ENCODE measurements at regions of chr6 and their contacts with region 1.

Region 1: GRCh38 chr6:143427109-143427817 is 23.2 kb downstream of the ADAT2 start:
- DNase-seq: peak; percentile 59 to 74 (median 65)
- ATAC-seq: peak; percentile 97 to 98 (median 98)
- H3K4me3 ChIP-seq: no peak overlapping the region
- H3K27ac ChIP-seq: no peak overlapping the region
- H3K4me1 ChIP-seq: peaks cover 0 to 14% (median 5%) of the 10 kb centered on the region in 4 donors
- H3K27me3 ChIP-seq: no peaks in the 10 kb centered on the region
- CTCF ChIP-seq: peak; percentile 83 to 97 (median 94)
- POLR2A ChIP-seq: no peak

Region 2: GRCh38 chr6:142692942-142693341 is 734.3 kb before region 1 on chr6:
- intact Hi-C with region 1: loop called in 1 of 2 experiments (anchors 10 kb)
- DNase-seq: peak in 2 of 3 donors; percentile 41 to 55
- ATAC-seq: peak; percentile 60 to 74 (median 72)
- H3K4me3 ChIP-seq: no peak overlapping the region
- H3K27ac ChIP-seq: no peak overlapping the region
- H3K4me1 ChIP-seq: peaks cover 0 to 30% (median 0%) of the 10 kb centered on the region in 4 donors
- H3K27me3 ChIP-seq: no peaks in the 10 kb centered on the region
- CTCF ChIP-seq: peak; percentile 84 to 92 (median 90)
- POLR2A ChIP-seq: no peak

Region 3: DNA sequence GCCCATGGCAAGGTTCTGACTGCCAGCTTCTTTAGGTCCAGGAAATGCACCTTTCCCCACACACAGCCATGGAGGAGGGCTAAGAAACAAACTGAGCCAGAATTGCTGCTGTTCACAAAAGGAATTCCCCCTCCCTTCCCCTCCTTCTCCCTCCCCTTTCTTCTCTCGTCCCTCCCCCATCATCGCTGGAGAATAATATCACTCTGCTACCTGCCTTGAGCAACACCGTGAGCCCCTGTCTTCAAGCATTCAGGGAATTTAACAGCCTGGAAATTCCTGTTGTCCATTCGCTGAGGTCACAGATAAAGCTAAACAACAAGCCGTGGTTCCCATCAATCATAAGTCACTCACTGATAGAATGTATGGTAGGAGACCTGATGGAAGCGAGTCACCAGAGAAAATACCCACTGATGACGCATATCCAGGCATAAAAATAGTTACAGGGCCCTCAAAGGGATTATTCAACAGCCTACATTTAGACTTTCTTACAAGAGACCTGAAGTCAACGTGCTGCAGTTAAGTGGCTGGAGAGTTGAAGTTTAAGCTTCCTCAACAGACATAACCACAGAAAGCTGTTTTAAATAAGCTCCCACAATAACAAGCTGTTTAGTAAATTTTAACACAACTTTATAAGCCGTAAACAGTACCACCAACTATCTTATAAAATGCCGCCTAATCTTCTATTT is 541.9 kb before region 1 on chr6:
- intact Hi-C with region 1: no loop called
- DNase-seq: no peak
- ATAC-seq: peak; percentile 38 to 77 (median 46)
- H3K4me3 ChIP-seq: no peak overlapping the region
- H3K27ac ChIP-seq: peak overlapping the region in 1 of 3 donors; percentile 1
- H3K4me1 ChIP-seq: peaks cover 0 to 6% (median 0%) of the 10 kb centered on the region in 4 donors
- H3K27me3 ChIP-seq: no peaks in the 10 kb centered on the region
- CTCF ChIP-seq: no peak
- POLR2A ChIP-seq: no peak

Region 4: DNA sequence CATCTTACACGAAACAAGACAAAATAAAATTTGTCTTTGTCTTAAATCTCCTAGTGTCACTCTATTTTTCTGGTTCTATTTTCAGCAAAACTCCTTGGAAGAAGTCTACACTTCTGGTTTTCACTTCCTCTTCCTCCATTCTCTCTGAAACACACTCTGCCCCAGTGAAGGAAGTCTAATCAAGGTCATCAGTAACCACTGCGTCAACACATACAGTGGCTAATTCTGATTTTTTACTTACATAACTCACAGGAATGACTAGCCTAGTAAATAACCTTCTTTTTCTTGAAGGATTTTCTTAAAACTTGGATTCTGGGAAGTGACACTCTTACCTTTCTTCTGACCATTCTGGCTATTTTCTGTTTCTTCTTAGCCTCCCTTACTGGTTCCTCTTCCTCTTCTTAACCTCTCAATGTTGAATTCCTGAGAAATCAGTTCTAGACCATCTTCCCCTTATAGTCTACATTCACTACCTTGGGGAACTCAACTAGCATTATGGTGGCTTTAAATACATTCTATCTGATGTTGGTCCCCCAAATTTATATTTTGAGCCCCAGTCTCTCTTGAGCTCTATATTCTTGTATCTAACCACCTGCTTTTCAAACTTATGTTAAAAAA is 329.1 kb before region 1 on chr6:
- intact Hi-C with region 1: no loop called
- DNase-seq: no peak
- ATAC-seq: peak; percentile 59 to 82 (median 68)
- H3K4me3 ChIP-seq: no peak overlapping the region
- H3K27ac ChIP-seq: peak overlapping the region in 1 of 3 donors; percentile 10
- H3K4me1 ChIP-seq: peaks cover 0 to 13% (median 4%) of the 10 kb centered on the region in 4 donors
- H3K27me3 ChIP-seq: no peaks in the 10 kb centered on the region
- CTCF ChIP-seq: no peak
- POLR2A ChIP-seq: no peak

Region 5: DNA sequence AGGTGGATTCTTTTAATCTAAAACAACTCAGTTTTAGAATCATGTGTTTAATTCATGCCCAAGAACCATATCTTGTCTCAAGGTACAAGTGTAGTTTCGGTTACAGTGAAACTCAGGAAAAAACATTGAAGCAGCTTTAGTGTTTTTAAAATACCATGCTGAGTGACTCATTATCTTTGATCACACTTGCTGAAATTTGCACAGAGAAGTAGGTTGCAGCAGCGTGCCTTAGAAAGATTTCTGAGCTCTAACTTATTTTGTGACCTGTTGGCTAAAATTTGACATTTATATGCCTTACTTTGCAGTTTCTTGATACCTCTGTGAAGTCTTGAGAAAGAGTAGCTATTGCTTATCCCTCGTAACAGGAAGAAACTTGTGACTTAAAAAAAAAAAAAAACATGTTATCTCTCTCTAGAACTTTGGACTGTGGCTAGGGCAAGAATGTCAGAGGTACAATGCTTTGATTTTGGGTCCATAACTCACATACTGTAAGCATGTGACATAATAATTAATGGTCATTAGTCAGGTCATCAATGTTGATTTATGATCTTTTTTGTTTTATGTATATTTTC is 118.8 kb after region 1 on chr6:
- intact Hi-C with region 1: no loop called
- DNase-seq: no peak
- ATAC-seq: no peak
- H3K4me3 ChIP-seq: no peak overlapping the region
- H3K27ac ChIP-seq: no peak overlapping the region
- H3K4me1 ChIP-seq: no peaks in the 10 kb centered on the region
- H3K27me3 ChIP-seq: no peaks in the 10 kb centered on the region
- CTCF ChIP-seq: no peak
- POLR2A ChIP-seq: no peak

Measured in right lobe of liver (tissue), 6 donors.